ENCODE measurements at regions of chr5 and their contacts with region 1.

Region 1: GRCh38 chr5:176619203-176619568 is 9.2 kb upstream of the GPRIN1 start:
- DNase-seq: peak; percentile 34 to 83 (median 63)
- ATAC-seq: peak; percentile 92
- H3K4me3 ChIP-seq: peak overlapping the region; percentile 13
- H3K4me3 Mint-ChIP-seq: peak overlapping the region; percentile 40 to 80 (median 60)
- H3K27ac ChIP-seq: no peak overlapping the region
- H3K27ac Mint-ChIP-seq: no peak overlapping the region
- H3K4me1 ChIP-seq: peaks cover 0 to 14% of the 10 kb centered on the region in 2 donors
- H3K4me1 Mint-ChIP-seq: peaks cover 8 to 23% (median 14%) of the 10 kb centered on the region in 7 donors
- H3K27me3 ChIP-seq: peaks cover 4 to 8% of the 10 kb centered on the region in 2 donors
- H3K27me3 Mint-ChIP-seq: peaks cover 46 to 85% (median 51%) of the 10 kb centered on the region in 5 donors

Region 2: DNA sequence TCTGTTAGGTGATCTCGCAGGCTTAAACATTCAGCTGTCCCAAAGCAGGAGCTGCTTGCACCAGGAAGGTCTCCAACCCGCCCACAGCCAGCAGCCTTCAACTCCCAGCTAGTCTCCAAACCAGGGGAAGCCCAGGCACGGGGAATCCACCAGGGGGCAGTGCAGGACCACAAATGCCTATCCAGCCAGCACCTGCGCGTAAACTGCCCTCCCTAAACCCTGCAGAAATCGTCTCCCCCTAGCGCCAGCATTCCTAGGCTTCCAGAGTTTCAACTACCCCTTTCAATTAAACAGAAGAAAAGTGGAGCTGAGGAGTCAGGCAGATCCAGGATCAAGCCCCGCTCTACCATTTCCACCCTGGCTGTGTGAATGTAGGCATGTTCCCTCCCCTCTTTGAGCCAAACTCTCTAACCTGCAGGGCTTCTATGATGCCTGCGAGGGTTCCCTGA is 889.3 kb before region 1 on chr5:
- CTCF ChIA-PET with region 1: no interaction called
- POLR2A ChIA-PET with region 1: no interaction called
- intact Hi-C with region 1: loop called in 1 of 2 experiments (anchors 1 kb)
- DNase-seq: peak; percentile 79 to 95 (median 90)
- ATAC-seq: peak; percentile 95
- H3K4me3 ChIP-seq: no peak overlapping the region
- H3K4me3 Mint-ChIP-seq: peak overlapping the region in 4 of 10 donors; percentile 1 to 15 (median 10)
- H3K27ac ChIP-seq: no peak overlapping the region
- H3K27ac Mint-ChIP-seq: peak overlapping the region in 1 of 9 donors; percentile 41
- H3K4me1 ChIP-seq: peaks cover 0 to 3% of the 10 kb centered on the region in 2 donors
- H3K4me1 Mint-ChIP-seq: peaks cover 0 to 9% (median 7%) of the 10 kb centered on the region in 7 donors
- H3K27me3 ChIP-seq: no peaks in the 10 kb centered on the region
- H3K27me3 Mint-ChIP-seq: peaks cover 13 to 39% (median 22%) of the 10 kb centered on the region in 5 donors

Region 3: GRCh38 chr5:176573564-176574296 is 45.5 kb before region 1 on chr5:
- CTCF ChIA-PET with region 1: no interaction called
- POLR2A ChIA-PET with region 1: no interaction called
- intact Hi-C with region 1: loop called (anchors 1 to 2 kb)
- DNase-seq: peak; percentile 48 to 80 (median 67)
- ATAC-seq: peak; percentile 88
- H3K4me3 ChIP-seq: no peak overlapping the region
- H3K4me3 Mint-ChIP-seq: no peak overlapping the region
- H3K27ac ChIP-seq: no peak overlapping the region
- H3K27ac Mint-ChIP-seq: peak overlapping the region in 1 of 9 donors; percentile 46
- H3K4me1 ChIP-seq: no peaks in the 10 kb centered on the region
- H3K4me1 Mint-ChIP-seq: peaks cover 0 to 11% (median 6%) of the 10 kb centered on the region in 7 donors
- H3K27me3 ChIP-seq: no peaks in the 10 kb centered on the region
- H3K27me3 Mint-ChIP-seq: peaks cover 0 to 4% (median 0%) of the 10 kb centered on the region in 5 donors

Region 4: GRCh38 chr5:176596689-176597416 is 22.3 kb before region 1 on chr5:
- CTCF ChIA-PET with region 1: no interaction called
- POLR2A ChIA-PET with region 1: no interaction called
- intact Hi-C with region 1: no loop called
- DNase-seq: peak; percentile 53 to 72 (median 67)
- ATAC-seq: peak; percentile 88
- H3K4me3 ChIP-seq: peak overlapping the region; percentile 41
- H3K4me3 Mint-ChIP-seq: peak overlapping the region; percentile 69 to 83 (median 79)
- H3K27ac ChIP-seq: peak overlapping the region; percentile 21
- H3K27ac Mint-ChIP-seq: peak overlapping the region in 7 of 9 donors; percentile 36 to 75 (median 50)
- H3K4me1 ChIP-seq: peaks cover 7% of the 10 kb centered on the region in 2 donors
- H3K4me1 Mint-ChIP-seq: peaks cover 4 to 8% (median 6%) of the 10 kb centered on the region in 7 donors
- H3K27me3 ChIP-seq: no peaks in the 10 kb centered on the region
- H3K27me3 Mint-ChIP-seq: peaks cover 0 to 4% (median 0%) of the 10 kb centered on the region in 5 donors

Region 5: DNA sequence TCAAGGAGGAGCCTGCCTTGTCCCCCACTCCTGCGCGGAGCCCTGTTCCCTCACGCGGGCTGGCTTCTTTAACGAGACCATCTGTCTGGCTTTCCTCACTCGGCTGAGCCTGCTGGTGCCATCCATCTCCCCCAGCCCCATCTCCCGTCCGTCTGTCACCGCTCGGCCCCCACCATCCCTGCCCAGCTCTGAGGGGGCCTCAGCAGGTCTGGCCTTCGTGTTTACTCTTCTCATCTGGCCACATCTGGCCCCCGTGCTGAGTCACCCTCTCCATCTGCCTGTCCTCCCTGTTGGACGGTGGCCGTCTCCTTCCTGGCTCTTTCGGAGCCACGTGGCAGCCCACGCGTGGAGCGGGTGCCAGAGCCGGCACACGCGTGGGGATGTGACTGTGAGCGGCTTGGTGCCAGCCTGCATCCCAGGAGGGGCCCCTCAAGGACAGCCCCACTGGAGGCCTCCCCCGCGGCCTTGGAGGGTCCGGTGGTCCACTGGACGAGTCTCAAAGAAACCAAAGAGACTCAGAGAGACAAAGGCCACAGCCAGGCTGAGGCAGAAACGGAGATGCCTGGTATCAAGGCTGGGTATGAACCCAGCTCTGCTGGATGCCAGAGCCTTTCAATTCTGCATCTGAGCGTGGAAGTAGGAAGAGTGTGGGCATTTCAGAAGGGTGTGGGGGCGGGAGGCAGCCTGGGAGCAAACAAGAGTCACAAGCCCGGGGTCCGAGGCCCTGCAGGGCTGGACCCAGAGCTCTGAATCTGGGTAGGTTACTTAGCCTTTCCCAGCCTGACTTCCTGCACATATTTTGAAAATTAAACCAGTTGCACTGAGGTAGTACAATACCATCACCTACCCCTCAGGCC is 114.4 kb after region 1 on chr5:
- CTCF ChIA-PET with region 1: no interaction called
- POLR2A ChIA-PET with region 1: no interaction called
- intact Hi-C with region 1: no loop called
- DNase-seq: no peak
- ATAC-seq: no peak
- H3K4me3 ChIP-seq: no peak overlapping the region
- H3K4me3 Mint-ChIP-seq: peak overlapping the region in 1 of 10 donors; percentile 41
- H3K27ac ChIP-seq: no peak overlapping the region
- H3K27ac Mint-ChIP-seq: no peak overlapping the region
- H3K4me1 ChIP-seq: no peaks in the 10 kb centered on the region
- H3K4me1 Mint-ChIP-seq: peaks cover 0 to 1% (median 0%) of the 10 kb centered on the region in 7 donors
- H3K27me3 ChIP-seq: no peaks in the 10 kb centered on the region
- H3K27me3 Mint-ChIP-seq: peaks cover 30 to 53% (median 48%) of the 10 kb centered on the region in 5 donors

Measured in naive thymus-derived CD4-positive, alpha-beta T cell (primary cell).